ENCODE measurements at regions of chr9 and their contacts with region 1.

Region 1: DNA sequence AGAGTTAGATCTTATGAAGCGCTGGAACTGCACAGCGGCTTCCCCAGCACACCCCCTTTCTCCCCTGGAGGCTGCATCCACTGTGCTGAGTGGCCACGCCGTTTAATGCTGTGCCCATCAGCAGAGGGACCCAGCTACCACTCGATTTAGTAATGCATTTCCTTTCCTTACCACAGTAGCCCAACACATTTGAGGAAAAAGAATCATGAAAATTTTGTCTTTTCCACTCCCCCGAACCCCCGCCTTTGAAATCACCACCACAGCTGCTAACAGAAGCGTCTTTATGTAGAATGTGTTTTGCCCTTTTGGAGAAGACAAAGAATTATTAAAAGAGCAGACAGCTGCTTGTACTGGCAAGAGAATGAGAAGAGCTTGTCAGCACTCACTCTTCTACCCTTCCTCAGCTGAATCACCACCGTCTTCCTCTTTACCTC is 73.2 kb downstream of the ACER2 start:
- DNase-seq: peak; percentile 47 to 91 (median 78)

Region 2: GRCh38 chr9:19641046-19641445 is 159.1 kb after region 1 on chr9:
- intact Hi-C with region 1: loop called (anchors 5 kb)
- DNase-seq: peak in 6 of 42 donors; percentile 28 to 76 (median 47)

Region 3: GRCh38 chr9:19782005-19782404 is 300.0 kb after region 1 on chr9:
- intact Hi-C with region 1: loop called (anchors 10 kb)
- DNase-seq: peak in 32 of 42 donors; percentile 3 to 81 (median 46)